GM12878 (cell line): ENCODE measurements at regions of chr1 and their contacts with region 1.

Region 1: DNA sequence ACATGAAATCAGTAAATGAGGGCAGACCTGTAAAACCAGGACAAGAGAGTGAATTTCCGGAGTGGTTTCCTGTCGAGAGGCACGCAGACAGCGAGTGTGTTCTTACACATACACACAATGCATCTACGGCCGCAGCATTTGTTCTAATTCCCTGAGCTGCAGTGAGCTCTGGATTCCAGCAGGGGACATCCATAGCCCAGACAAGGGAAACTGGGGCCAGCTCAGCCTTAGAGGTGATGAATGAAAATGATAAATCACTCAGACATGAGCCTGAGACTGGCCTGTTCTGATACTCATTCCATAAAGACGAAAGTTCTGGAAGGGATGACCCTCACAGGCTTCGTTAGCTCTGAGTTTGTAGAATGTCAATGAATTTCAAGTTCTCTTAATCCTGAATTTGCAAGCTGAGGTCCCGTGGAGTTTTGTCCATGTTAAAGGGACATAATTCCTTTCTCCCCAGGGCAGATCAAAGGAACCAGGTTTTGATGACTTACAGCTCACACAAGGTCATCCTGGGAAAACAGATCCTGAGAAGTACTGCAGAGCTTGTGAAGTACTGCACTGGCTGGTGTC is 207.9 kb upstream of the C1orf87 start:
- DNase-seq: peak; percentile 1
- ATAC-seq: peak; percentile 91
- H3K4me3 ChIP-seq: no peak overlapping the region
- H3K27ac ChIP-seq: no peak overlapping the region
- H3K4me1 ChIP-seq: no peaks in the 10 kb centered on the region
- H3K27me3 ChIP-seq: no peaks in the 10 kb centered on the region
- CTCF ChIP-seq: peak; percentile 70 to 86 (median 71)
- EP300 ChIP-seq: no peak
- POLR2A ChIP-seq: no peak
- RAD21 ChIP-seq: peak; percentile 97

Region 2: DNA sequence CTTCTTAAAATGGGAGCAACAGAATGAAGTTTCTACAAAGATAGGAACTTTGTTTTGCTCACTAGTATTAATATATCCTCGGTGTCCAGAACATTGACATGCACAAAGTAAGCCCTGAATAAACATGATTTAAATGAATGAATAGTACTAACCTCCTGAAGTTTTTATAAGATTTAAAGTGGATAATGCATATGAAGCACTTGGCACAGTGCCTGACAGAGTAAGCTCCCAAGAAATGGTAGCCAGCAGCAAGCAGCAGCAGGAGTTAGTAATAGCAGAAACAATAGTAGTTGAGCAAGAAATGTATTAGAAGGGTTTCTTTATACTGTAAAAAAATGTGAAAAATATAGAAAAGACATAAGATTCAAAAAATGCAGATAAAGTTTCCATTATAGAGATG is 50.2 kb after region 1 on chr1:
- CTCF ChIA-PET with region 1: no interaction called
- POLR2A ChIA-PET with region 1: no interaction called
- RAD21 ChIA-PET with region 1: no interaction called
- SMC1A ChIA-PET with region 1: no interaction called
- in situ Hi-C with region 1: no loop called
- intact Hi-C with region 1: no loop called
- DNase-seq: no peak
- ATAC-seq: no peak
- H3K4me3 ChIP-seq: no peak overlapping the region
- H3K27ac ChIP-seq: no peak overlapping the region
- H3K4me1 ChIP-seq: no peaks in the 10 kb centered on the region
- H3K27me3 ChIP-seq: no peaks in the 10 kb centered on the region
- CTCF ChIP-seq: no peak
- EP300 ChIP-seq: no peak
- POLR2A ChIP-seq: no peak
- RAD21 ChIP-seq: no peak

Region 3: GRCh38 chr1:61049850-61050540 is 768.5 kb after region 1 on chr1:
- CTCF ChIA-PET with region 1: interaction called, 4 read pairs
- POLR2A ChIA-PET with region 1: no interaction called
- RAD21 ChIA-PET with region 1: no interaction called
- SMC1A ChIA-PET with region 1: no interaction called
- in situ Hi-C with region 1: no loop called
- intact Hi-C with region 1: loop called (anchors 10 kb)
- DNase-seq: no peak
- ATAC-seq: peak; percentile 89
- H3K4me3 ChIP-seq: peak overlapping the region; percentile 32; the same call in 1 of the 2 replicates
- H3K27ac ChIP-seq: no peak overlapping the region
- H3K4me1 ChIP-seq: no peaks in the 10 kb centered on the region
- H3K27me3 ChIP-seq: peaks cover 5 to 22% of the 10 kb centered on the region in 2 experiments
- CTCF ChIP-seq: peak; percentile 75 to 80 (median 79)
- EP300 ChIP-seq: no peak
- POLR2A ChIP-seq: no peak
- RAD21 ChIP-seq: peak; percentile 62